ENCODE measurements at regions of chr5 and their contacts with region 1.

Region 1: GRCh38 chr5:119022017-119022745 is 33.8 kb upstream of the DTWD2 start:
- DNase-seq: peak; percentile 58
- H3K4me3 ChIP-seq: no peak overlapping the region
- H3K27ac ChIP-seq: no peak overlapping the region
- H3K4me1 ChIP-seq: no peaks in the 10 kb centered on the region
- H3K27me3 ChIP-seq: no peaks in the 10 kb centered on the region
- CTCF ChIP-seq: no peak
- POLR2A ChIP-seq: no peak

Region 2: DNA sequence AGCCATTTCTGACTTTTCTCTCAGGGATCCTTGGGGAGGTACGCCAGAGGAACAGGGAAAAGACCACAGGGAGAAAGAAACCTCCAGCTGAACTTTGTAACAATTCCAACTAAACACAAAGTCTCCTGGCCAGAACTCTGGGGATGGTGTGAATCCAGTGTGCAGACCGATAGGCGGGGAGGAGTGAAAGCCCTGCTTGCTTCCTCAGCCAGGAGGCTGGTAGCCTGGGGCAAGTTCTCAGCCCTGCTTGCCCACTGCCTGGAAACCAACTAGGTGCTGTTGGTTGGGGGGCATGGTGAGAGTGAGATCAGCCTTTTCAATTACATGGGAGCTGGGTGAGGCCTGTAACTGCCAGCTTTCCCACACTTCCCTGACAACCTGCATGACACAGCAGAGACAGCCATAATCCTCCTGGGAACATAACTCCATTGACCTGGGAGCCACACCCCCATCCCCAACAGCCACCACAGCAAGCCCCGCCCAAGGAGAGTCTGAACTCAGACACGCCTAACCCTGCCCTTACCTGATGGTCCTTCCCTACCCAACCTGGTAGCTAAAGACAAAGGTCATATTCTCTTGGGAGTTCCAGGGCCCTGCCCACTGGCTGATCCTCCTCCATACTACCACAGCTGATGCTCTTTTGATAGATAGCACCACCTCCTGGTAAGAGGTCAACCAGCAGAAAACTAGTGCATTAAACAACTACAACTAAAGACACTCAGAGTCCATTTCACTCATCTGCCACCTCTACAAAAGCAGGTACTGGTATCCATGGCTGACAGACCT is 233.6 kb after region 1 on chr5:
- CTCF ChIA-PET with region 1: interaction called, 22 read pairs
- POLR2A ChIA-PET with region 1: no interaction called
- dilution Hi-C with region 1: no loop called
- intact Hi-C with region 1: loop called (anchors 1 kb)
- DNase-seq: peak; percentile 28
- H3K4me3 ChIP-seq: no peak overlapping the region
- H3K27ac ChIP-seq: no peak overlapping the region
- H3K4me1 ChIP-seq: no peaks in the 10 kb centered on the region
- H3K27me3 ChIP-seq: no peaks in the 10 kb centered on the region
- CTCF ChIP-seq: peak; percentile 45 to 52
- POLR2A ChIP-seq: no peak

Region 3: GRCh38 chr5:119332978-119333401 is 310.8 kb after region 1 on chr5:
- CTCF ChIA-PET with region 1: interaction called, 22 read pairs
- POLR2A ChIA-PET with region 1: no interaction called
- dilution Hi-C with region 1: no loop called
- intact Hi-C with region 1: no loop called
- DNase-seq: no peak
- H3K4me3 ChIP-seq: no peak overlapping the region
- H3K27ac ChIP-seq: no peak overlapping the region
- H3K4me1 ChIP-seq: no peaks in the 10 kb centered on the region
- H3K27me3 ChIP-seq: no peaks in the 10 kb centered on the region
- CTCF ChIP-seq: no peak
- POLR2A ChIP-seq: no peak

Region 4: GRCh38 chr5:119435436-119436132 is 413.4 kb after region 1 on chr5:
- CTCF ChIA-PET with region 1: interaction called, 20 read pairs
- POLR2A ChIA-PET with region 1: no interaction called
- dilution Hi-C with region 1: no loop called
- intact Hi-C with region 1: no loop called
- DNase-seq: peak; percentile 62
- H3K4me3 ChIP-seq: no peak overlapping the region
- H3K27ac ChIP-seq: no peak overlapping the region
- H3K4me1 ChIP-seq: no peaks in the 10 kb centered on the region
- H3K27me3 ChIP-seq: peaks cover 4% of the 10 kb centered on the region in 2 experiments
- CTCF ChIP-seq: peak; percentile 59 to 80
- POLR2A ChIP-seq: no peak